ENCODE measurements at regions of chr10 and their contacts with region 1.

Region 1: DNA sequence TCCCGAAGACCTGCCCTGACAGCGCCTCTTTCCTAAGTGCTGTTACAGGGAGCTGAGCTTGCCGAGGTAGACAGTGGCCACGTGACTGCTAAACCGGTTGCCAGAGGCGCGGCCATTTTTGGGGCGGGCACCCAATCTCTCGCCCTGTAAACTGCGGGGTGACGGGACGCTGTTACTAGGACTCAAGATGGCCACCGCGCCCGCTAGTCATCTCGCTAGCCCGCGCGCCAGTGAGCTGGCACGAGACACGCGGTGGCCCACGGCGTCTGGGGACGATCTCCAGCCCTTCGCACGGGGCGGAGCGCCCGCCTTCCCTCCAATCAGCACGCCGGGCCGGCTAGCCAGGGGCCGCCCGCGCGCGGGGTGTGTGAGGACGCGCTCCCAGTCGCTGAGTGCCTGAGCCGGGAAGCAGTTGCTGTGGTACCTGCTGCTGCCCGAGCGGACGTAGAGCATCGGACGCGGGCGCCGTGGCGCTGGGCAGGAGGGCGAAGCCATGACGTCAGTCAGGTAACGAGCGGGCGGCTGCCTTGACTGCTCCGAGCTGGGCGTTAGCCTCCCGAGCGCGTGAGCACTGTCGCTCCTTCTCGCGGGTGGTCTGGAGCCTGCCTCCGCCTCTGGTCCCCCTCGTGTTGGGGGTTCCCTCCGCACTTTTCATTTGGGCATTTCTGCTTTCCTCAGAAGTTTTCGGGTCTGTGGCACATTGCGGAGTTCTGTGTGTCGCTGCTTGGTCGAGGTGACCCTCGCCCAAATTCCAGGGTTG is 25.5 kb downstream of the ADK start:
- H3K4me3 ChIP-seq: peak overlapping the region; percentile 71
- H3K27ac ChIP-seq: peak overlapping the region; percentile 78
- H3K4me1 ChIP-seq: peaks cover 8% of the 10 kb centered on the region
- CTCF ChIP-seq: no peak; the same call in 1 of the 2 replicates

Region 2: GRCh38 chr10:74113546-74113945 is 63.0 kb before region 1 on chr10:
- CTCF ChIA-PET with region 1: no interaction called
- POLR2A ChIA-PET with region 1: no interaction called
- H3K4me3 ChIP-seq: no peak overlapping the region
- H3K27ac ChIP-seq: no peak overlapping the region
- H3K4me1 ChIP-seq: no peaks in the 10 kb centered on the region
- CTCF ChIP-seq: no peak

Region 3: GRCh38 chr10:74151056-74151878 is 25.3 kb before region 1 on chr10 and contains the start of gene ADK:
- CTCF ChIA-PET with region 1: interaction called, 3 read pairs
- POLR2A ChIA-PET with region 1: interaction called, 22 read pairs
- H3K4me3 ChIP-seq: peak within 1 kb of the TSS; percentile 88
- H3K27ac ChIP-seq: peak within 1 kb of the TSS; percentile 91
- H3K4me1 ChIP-seq: peaks cover 10% of the 10 kb centered on the region
- CTCF ChIP-seq: peak; percentile 98

Region 4: GRCh38 chr10:74165530-74165901 is 11.0 kb before region 1 on chr10:
- CTCF ChIA-PET with region 1: no interaction called
- POLR2A ChIA-PET with region 1: interaction called, 22 read pairs
- H3K4me3 ChIP-seq: no peak overlapping the region
- H3K27ac ChIP-seq: no peak overlapping the region
- H3K4me1 ChIP-seq: peaks cover 17% of the 10 kb centered on the region
- CTCF ChIP-seq: no peak

Measured in HEK293 (cell line).